ENCODE measurements at regions of chr2 and their contacts with region 1.

Region 1: DNA sequence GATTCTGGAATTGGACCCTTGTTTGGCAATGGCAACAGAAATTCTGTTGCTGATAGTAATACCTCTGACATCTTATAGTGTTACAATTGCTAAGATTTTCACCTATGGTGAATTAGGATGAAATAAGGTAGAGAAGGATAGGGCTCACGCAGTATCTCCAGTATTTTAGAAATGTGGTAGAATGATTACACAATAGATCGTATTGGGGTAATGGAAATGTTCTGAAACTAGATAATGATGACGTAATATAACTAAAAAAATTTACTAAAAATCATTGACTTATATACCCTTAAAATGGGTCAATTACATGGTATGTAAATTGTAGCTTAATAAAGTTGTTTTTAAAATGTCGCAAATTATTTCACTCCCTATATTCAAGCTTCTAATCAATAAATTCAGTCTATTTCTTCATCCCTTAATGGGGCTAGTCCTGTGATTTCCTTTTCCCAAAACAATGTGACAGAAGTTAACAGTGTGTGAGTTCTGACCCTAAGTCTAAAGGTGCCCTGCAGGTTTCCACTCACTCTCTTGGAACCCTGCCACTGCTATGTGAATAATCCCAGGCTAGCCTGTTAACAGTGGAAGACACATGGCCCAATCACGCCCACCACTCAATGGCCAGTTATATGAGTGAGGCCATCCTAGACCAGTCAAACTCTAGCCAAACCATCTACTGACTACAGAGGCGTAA is 31.2 kb downstream of the USP37 start:
- DNase-seq: no peak
- H3K4me3 ChIP-seq: no peak overlapping the region
- H3K4me3 Mint-ChIP-seq: no peak overlapping the region
- H3K27ac Mint-ChIP-seq: no peak overlapping the region
- H3K4me1 ChIP-seq: no peaks in the 10 kb centered on the region
- H3K4me1 Mint-ChIP-seq: no peaks in the 10 kb centered on the region
- H3K27me3 ChIP-seq: no peaks in the 10 kb centered on the region
- H3K27me3 Mint-ChIP-seq: no peaks in the 10 kb centered on the region
- CTCF ChIP-seq: no peak

Region 2: DNA sequence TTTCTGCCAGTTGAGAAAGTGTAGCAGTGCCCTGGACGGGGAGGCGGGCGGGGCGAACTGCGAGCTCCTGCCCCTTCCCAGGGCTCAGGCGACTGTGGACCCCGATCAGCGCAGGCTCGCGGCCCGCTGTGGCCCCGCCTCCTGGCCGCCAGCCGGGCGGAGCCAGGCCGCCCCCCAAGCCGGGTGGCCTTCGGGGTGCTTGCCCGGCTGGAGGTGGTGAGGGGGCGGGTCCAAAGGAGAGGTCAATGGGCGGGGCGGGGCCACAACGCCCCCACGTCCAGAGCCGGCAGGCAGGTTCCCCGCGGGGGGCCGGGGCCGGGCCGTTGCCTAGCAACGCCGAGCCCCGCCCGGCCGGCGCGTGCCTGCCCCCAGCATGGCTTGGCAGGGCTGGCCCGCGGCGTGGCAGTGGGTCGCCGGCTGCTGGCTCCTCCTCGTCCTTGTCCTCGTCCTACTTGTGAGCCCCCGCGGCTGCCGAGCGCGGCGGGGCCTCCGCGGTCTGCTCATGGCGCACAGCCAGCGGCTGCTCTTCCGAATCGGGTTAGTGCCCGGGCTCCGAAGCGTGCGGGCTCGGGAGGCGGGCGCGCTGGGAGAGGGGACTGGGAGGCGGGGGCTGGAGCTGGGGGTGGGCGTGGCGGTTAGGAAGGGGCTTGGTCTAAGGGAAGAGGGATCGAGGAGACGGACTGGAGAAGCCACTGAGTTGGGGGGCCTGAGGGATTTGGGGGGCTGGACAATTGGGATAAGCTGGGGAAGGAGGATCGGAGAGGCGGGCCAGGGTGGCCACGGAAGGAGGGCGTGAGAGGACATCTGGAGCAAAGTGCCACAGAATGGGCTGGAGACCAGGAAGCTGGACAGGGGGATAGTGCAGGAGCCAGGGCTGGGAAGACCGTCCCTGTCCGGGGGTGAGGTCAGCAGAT is 213.8 kb before region 1 on chr2:
- CTCF ChIA-PET with region 1: no interaction called
- POLR2A ChIA-PET with region 1: no interaction called
- intact Hi-C with region 1: no loop called
- DNase-seq: peak; percentile 86 to 88
- H3K4me3 ChIP-seq: peak overlapping the region; percentile 66
- H3K4me3 Mint-ChIP-seq: peak overlapping the region; percentile 92
- H3K27ac Mint-ChIP-seq: peak overlapping the region; percentile 85
- H3K4me1 ChIP-seq: peaks cover 21% of the 10 kb centered on the region
- H3K4me1 Mint-ChIP-seq: peaks cover 15% of the 10 kb centered on the region
- H3K27me3 ChIP-seq: no peaks in the 10 kb centered on the region
- H3K27me3 Mint-ChIP-seq: no peaks in the 10 kb centered on the region
- CTCF ChIP-seq: no peak

Region 3: GRCh38 chr2:218500501-218501060 is 36.4 kb before region 1 on chr2:
- CTCF ChIA-PET with region 1: no interaction called
- POLR2A ChIA-PET with region 1: no interaction called
- intact Hi-C with region 1: loop called (anchors 2 kb)
- DNase-seq: no peak
- H3K4me3 ChIP-seq: no peak overlapping the region
- H3K4me3 Mint-ChIP-seq: no peak overlapping the region
- H3K27ac Mint-ChIP-seq: no peak overlapping the region
- H3K4me1 ChIP-seq: 0 out of 2 replicates have a peak, but pooled peaks cover 4% of the 10 kb centered on the region
- H3K4me1 Mint-ChIP-seq: peaks cover 10% of the 10 kb centered on the region
- H3K27me3 ChIP-seq: no peaks in the 10 kb centered on the region
- H3K27me3 Mint-ChIP-seq: no peaks in the 10 kb centered on the region
- CTCF ChIP-seq: no peak

Measured in Caco-2 (cell line).